Endothelial cell of umbilical vein (primary cell): ENCODE measurements at regions of chr2 and their contacts with region 1.

Region 1: GRCh38 chr2:147937744-147938349 is 82.7 kb downstream of the ORC4 start:
- DNase-seq: peak; percentile 36
- H3K4me3 ChIP-seq: no peak overlapping the region
- H3K27ac ChIP-seq: no peak overlapping the region
- H3K4me1 ChIP-seq: no peaks in the 10 kb centered on the region
- H3K27me3 ChIP-seq: no peaks in the 10 kb centered on the region
- CTCF ChIP-seq: peak; percentile 51 to 69
- POLR2A ChIP-seq: no peak

Region 2: GRCh38 chr2:147836099-147836498 is 101.7 kb before region 1 on chr2:
- CTCF ChIA-PET with region 1: no interaction called
- POLR2A ChIA-PET with region 1: no interaction called
- dilution Hi-C with region 1: no loop called
- intact Hi-C with region 1: no loop called
- DNase-seq: no peak
- H3K4me3 ChIP-seq: no peak overlapping the region
- H3K27ac ChIP-seq: no peak overlapping the region
- H3K4me1 ChIP-seq: no peaks in the 10 kb centered on the region
- H3K27me3 ChIP-seq: peaks cover 4 to 8% of the 10 kb centered on the region in 2 experiments
- CTCF ChIP-seq: no peak
- POLR2A ChIP-seq: no peak

Region 3: GRCh38 chr2:148201075-148202004 is 263.5 kb after region 1 on chr2:
- CTCF ChIA-PET with region 1: no interaction called
- POLR2A ChIA-PET with region 1: no interaction called
- dilution Hi-C with region 1: no loop called
- intact Hi-C with region 1: loop called (anchors 1 kb)
- DNase-seq: peak; percentile 22
- H3K4me3 ChIP-seq: no peak overlapping the region
- H3K27ac ChIP-seq: no peak overlapping the region
- H3K4me1 ChIP-seq: no peaks in the 10 kb centered on the region
- H3K27me3 ChIP-seq: no peaks in the 10 kb centered on the region
- CTCF ChIP-seq: peak; percentile 29 to 53
- POLR2A ChIP-seq: no peak